Activated naive CD4-positive, alpha-beta T cell treated with anti-CD3 and anti-CD28 coated beads, Interleukin-2, amount 10 ng/mL, durations not matched to agents 7 days and 5 days (primary cell): ENCODE measurements at regions of chr11 and their contacts with region 1.

Region 1: GRCh38 chr11:66579017-66579606 is 10.7 kb upstream of the CTSF start:
- DNase-seq: peak; percentile 83
- H3K4me3 Mint-ChIP-seq: no peak overlapping the region
- H3K27ac Mint-ChIP-seq: no peak overlapping the region
- H3K4me1 Mint-ChIP-seq: no peaks in the 10 kb centered on the region
- H3K27me3 Mint-ChIP-seq: peaks cover 39% of the 10 kb centered on the region

Region 2: DNA sequence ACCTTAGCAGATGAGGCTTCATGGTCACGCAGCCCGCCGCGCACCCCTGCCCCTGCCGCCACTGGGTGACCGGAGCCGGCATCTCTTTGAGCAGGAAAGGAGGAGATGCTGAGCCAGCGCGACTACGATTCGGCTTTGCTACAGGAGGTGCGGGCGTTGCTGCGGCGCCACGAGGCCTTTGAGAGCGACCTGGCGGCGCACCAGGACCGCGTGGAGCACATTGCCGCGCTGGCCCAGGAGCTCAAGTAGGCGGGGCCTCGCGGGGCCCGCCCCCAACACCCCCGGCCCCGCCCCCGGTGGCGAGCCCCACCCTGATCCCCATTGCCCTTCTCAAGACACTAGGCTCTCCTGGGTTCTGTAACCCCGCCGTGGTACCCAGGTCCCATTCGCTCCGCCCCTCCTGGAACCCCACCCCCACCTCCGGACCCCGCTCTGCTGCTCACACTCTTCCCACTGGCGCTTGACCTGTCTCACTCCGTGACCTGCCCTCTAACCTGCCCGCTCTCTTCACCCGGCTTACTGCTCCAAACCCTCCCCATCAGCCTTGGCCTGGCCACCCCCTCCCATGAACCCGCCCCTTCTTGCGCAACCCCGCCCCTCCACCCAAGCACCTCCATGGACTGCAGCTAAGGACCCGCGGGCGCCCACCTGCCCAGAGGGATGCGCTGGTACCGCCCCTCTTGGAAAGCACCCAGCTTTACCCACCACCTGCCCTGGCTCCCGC is 19.8 kb before region 1 on chr11:
- CTCF ChIA-PET with region 1: interaction called, 19 read pairs
- DNase-seq: peak; percentile 49
- H3K4me3 Mint-ChIP-seq: no peak overlapping the region
- H3K27ac Mint-ChIP-seq: no peak overlapping the region
- H3K4me1 Mint-ChIP-seq: peaks cover 3% of the 10 kb centered on the region
- H3K27me3 Mint-ChIP-seq: peaks cover 62% of the 10 kb centered on the region

Region 3: DNA sequence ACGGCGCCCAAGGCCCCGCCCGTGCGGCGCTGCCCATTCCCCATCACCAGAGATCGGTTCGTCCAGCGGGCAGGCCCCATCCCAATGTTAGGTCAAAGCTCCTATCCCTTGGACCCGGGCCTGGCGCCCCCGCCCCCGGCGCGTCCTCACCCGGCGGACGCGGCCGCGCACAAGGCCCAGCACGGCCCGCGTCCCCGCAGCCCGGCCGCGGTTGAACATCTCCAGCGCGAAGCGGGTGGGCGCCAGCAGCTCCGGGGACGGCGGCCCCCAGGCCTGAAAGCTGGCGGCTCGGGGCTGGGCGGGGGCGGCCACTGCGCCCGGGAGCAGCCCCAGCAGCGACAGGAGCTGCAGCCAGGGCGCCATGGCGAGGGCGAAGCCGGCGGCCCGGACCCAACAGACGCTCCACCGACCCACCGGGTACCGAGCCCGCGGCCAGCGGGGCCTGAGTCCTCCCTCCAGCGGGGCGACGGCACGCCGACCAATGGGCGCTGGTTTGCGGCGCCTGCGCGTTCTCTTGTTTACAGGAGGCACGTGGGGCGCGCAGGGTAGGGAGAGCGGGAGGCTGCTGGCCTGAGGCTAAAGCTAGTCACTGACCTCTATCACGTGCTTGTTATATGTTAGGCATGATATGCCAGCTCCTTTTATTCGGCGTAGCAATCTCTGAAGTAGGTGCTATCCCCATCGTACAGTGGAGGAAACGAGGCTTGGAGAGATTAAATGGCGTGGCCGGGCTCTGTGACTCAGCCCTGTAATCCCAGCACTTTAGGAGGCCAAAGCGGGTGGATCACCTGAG is 10.8 kb before region 1 on chr11 and contains the start of gene CTSF:
- CTCF ChIA-PET with region 1: interaction called, 19 read pairs
- DNase-seq: peak; percentile 82
- H3K4me3 Mint-ChIP-seq: peak within 1 kb of the TSS; percentile 69
- H3K27ac Mint-ChIP-seq: no peak within 1 kb of the TSS
- H3K4me1 Mint-ChIP-seq: peaks cover 5% of the 10 kb centered on the region
- H3K27me3 Mint-ChIP-seq: peaks cover 52% of the 10 kb centered on the region

Region 4: GRCh38 chr11:66677599-66678375 is 98.7 kb after region 1 on chr11 and contains the start of gene RBM4B:
- CTCF ChIA-PET with region 1: interaction called, 84 read pairs
- DNase-seq: peak; percentile 97
- H3K4me3 Mint-ChIP-seq: peak within 1 kb of the TSS; percentile 96
- H3K27ac Mint-ChIP-seq: peak within 1 kb of the TSS; percentile 99
- H3K4me1 Mint-ChIP-seq: peaks cover 39% of the 10 kb centered on the region
- H3K27me3 Mint-ChIP-seq: peaks cover 3% of the 10 kb centered on the region

Region 5: DNA sequence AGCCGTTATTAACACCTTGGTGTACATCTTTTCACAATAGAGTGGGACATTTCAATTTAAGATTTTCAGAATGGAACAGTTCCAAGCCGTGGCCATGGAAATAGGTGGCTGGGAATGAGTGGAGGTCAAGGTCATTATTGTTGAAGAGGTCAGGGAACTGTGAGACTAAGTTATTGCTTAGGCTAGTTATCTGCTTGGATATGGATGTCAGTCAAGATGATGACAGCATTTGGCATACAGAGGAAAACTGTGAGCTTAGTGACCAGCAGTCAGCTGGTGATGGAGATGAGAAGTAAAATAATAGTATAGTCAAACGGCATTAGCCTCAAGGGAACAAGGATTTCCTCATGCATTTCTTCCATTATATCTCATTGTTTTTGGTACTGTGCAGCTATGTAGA is 211.5 kb after region 1 on chr11:
- CTCF ChIA-PET with region 1: no interaction called
- DNase-seq: no peak
- H3K4me3 Mint-ChIP-seq: no peak overlapping the region
- H3K27ac Mint-ChIP-seq: no peak overlapping the region
- H3K4me1 Mint-ChIP-seq: no peaks in the 10 kb centered on the region
- H3K27me3 Mint-ChIP-seq: no peaks in the 10 kb centered on the region